A673 (cell line): ENCODE measurements at regions of chr19 and their contacts with region 1.

Region 1: DNA sequence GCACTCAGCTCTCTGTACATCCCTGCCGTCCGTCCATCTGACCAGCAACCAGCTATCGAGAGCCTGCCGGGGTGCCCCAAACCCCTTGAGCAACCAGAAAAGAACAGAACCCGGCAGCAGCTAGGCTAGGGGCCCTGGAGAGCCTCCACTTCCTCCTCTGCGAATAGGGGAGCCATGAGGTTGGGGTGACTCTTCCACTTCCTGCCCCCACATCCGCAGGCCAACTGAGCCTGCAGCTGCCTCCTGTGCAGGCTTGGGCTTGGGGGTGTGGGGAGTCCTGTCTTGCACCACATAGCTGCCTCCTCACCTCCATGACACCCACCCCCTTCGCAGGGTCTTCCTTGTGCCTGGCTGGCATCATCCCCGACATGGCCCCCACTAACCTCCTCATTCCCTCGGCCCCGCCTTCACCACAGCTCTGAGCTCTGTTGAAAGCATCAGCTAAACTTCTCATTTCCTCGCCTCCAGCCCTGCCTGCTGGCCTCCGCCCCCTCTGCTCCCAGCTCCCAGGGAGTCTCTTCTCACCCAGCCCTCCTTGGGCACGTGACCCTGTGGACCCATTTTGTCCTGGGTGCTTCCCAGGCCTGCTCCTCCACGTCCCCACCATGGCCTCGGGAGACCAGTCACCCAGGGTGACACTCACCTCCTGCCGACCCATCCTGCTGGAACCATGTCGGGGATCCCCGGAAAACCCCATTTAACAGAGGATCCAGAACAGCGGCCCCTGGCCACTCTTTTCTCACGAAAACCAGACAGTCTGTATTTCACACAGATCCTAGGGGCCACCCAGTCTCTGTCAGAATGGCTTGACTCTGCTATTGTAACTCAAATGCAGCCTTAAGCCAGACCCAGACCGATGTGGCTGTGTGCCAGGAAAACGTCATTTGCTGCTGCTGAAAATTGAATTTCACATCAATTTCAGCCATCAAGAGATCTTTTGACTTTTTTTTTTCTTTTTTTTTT is 50.4 kb downstream of the MYO9B start:
- DNase-seq: no peak
- H3K4me3 ChIP-seq: no peak overlapping the region
- H3K27ac ChIP-seq: no peak overlapping the region
- H3K4me1 ChIP-seq: peaks cover 4% of the 10 kb centered on the region
- H3K27me3 ChIP-seq: no peaks in the 10 kb centered on the region
- CTCF ChIP-seq: no peak

Region 2: DNA sequence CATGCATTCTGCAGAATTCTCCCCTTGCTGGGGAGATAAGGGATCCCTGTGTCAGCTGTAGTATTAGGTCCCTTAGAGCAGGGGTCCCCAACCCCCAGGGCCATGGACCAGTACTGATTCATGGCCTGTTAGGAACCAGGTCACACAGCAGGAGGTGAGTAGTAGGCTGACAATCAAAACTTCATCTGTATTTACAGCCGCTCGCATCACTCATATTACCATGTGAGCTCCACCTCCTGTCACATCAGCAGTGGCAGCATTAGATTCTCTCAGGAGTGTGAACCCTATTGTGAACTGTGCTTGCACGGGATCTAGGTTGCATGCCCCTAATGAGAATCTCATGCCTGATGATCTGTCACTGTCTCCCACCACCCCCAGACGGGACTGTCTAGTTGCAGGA is 137.3 kb before region 1 on chr19:
- CTCF ChIA-PET with region 1: no interaction called
- POLR2A ChIA-PET with region 1: interaction called, 16 read pairs
- intact Hi-C with region 1: no loop called
- DNase-seq: no peak
- H3K4me3 ChIP-seq: no peak overlapping the region
- H3K27ac ChIP-seq: no peak overlapping the region
- H3K4me1 ChIP-seq: no peaks in the 10 kb centered on the region
- H3K27me3 ChIP-seq: no peaks in the 10 kb centered on the region
- CTCF ChIP-seq: no peak

Region 3: GRCh38 chr19:17136021-17136420 is 10.0 kb after region 1 on chr19:
- CTCF ChIA-PET with region 1: no interaction called
- POLR2A ChIA-PET with region 1: no interaction called
- intact Hi-C with region 1: no loop called
- DNase-seq: no peak
- H3K4me3 ChIP-seq: no peak overlapping the region
- H3K27ac ChIP-seq: peak overlapping the region; percentile 92
- H3K4me1 ChIP-seq: peaks cover 23% of the 10 kb centered on the region
- H3K27me3 ChIP-seq: no peaks in the 10 kb centered on the region
- CTCF ChIP-seq: no peak

Region 4: GRCh38 chr19:17201913-17202648 is 76.1 kb after region 1 on chr19:
- CTCF ChIA-PET with region 1: no interaction called
- POLR2A ChIA-PET with region 1: no interaction called
- intact Hi-C with region 1: no loop called
- DNase-seq: peak; percentile 33
- H3K4me3 ChIP-seq: no peak overlapping the region
- H3K27ac ChIP-seq: no peak overlapping the region
- H3K4me1 ChIP-seq: no peaks in the 10 kb centered on the region
- H3K27me3 ChIP-seq: no peaks in the 10 kb centered on the region
- CTCF ChIP-seq: no peak